Naive thymus-derived CD4-positive, alpha-beta T cell (primary cell): ENCODE measurements at regions of chr5 and their contacts with region 1.

Region 1: GRCh38 chr5:131521252-131521651 is 113.8 kb downstream of the RAPGEF6 start:
- DNase-seq: no peak
- ATAC-seq: no peak
- H3K4me3 ChIP-seq: no peak overlapping the region
- H3K4me3 Mint-ChIP-seq: peak overlapping the region in 1 of 10 donors; percentile 61
- H3K27ac ChIP-seq: no peak overlapping the region
- H3K27ac Mint-ChIP-seq: peak overlapping the region in 4 of 9 donors; percentile 2 to 87 (median 36)
- H3K4me1 ChIP-seq: peaks cover 7 to 31% of the 10 kb centered on the region in 2 donors
- H3K4me1 Mint-ChIP-seq: peaks cover 34 to 92% (median 82%) of the 10 kb centered on the region in 7 donors
- H3K27me3 ChIP-seq: no peaks in the 10 kb centered on the region
- H3K27me3 Mint-ChIP-seq: no peaks in the 10 kb centered on the region

Region 2: GRCh38 chr5:131536211-131536826 is 15.1 kb after region 1 on chr5:
- CTCF ChIA-PET with region 1: interaction called, 4 read pairs
- POLR2A ChIA-PET with region 1: interaction called, 144 read pairs
- intact Hi-C with region 1: loop called in 1 of 2 experiments (anchors 1 kb)
- DNase-seq: peak in 6 of 9 donors; percentile 33 to 61 (median 56)
- ATAC-seq: peak; percentile 65
- H3K4me3 ChIP-seq: peak overlapping the region; percentile 1
- H3K4me3 Mint-ChIP-seq: peak overlapping the region; percentile 63 to 82 (median 76)
- H3K27ac ChIP-seq: peak overlapping the region; percentile 72
- H3K27ac Mint-ChIP-seq: peak overlapping the region; percentile 73 to 93 (median 86)
- H3K4me1 ChIP-seq: peaks cover 27 to 69% of the 10 kb centered on the region in 2 donors
- H3K4me1 Mint-ChIP-seq: peaks cover 51 to 99% (median 86%) of the 10 kb centered on the region in 7 donors
- H3K27me3 ChIP-seq: no peaks in the 10 kb centered on the region
- H3K27me3 Mint-ChIP-seq: no peaks in the 10 kb centered on the region

Region 3: GRCh38 chr5:131899692-131900091 is 378.4 kb after region 1 on chr5:
- CTCF ChIA-PET with region 1: no interaction called
- POLR2A ChIA-PET with region 1: no interaction called
- intact Hi-C with region 1: no loop called
- DNase-seq: no peak
- ATAC-seq: no peak
- H3K4me3 ChIP-seq: no peak overlapping the region
- H3K4me3 Mint-ChIP-seq: no peak overlapping the region
- H3K27ac ChIP-seq: no peak overlapping the region
- H3K27ac Mint-ChIP-seq: peak overlapping the region in 1 of 9 donors; percentile 17
- H3K4me1 ChIP-seq: peaks cover 8 to 16% of the 10 kb centered on the region in 2 donors
- H3K4me1 Mint-ChIP-seq: peaks cover 15 to 26% (median 19%) of the 10 kb centered on the region in 7 donors
- H3K27me3 ChIP-seq: no peaks in the 10 kb centered on the region
- H3K27me3 Mint-ChIP-seq: peaks cover 0 to 24% (median 8%) of the 10 kb centered on the region in 5 donors